ENCODE measurements at regions of chr6 and their contacts with region 1.

Region 1: DNA sequence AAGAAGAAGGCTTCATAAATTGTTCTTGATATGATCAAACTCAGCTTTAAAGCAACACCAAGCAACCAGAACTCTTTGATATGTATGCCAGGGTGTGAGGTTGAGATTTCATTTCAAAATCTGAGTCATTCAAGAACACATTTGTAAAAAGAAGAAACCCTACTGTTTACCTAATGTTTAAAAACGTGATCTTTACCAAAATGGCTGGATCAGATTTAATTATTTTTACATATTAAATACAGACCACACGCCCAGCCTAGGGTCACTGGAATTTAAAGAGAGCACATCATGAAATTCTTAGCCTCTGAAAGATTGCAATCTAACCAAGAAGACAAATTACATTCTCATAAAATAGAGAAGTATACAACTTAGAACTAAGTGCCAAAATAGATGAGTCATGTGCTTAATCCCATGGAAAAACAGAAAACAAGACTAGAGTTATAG is 206.8 kb upstream of the SMLR1 start:
- DNase-seq: no peak
- H3K4me3 Mint-ChIP-seq: no peak overlapping the region
- H3K27ac Mint-ChIP-seq: no peak overlapping the region
- H3K4me1 Mint-ChIP-seq: peaks cover 51% of the 10 kb centered on the region
- H3K27me3 Mint-ChIP-seq: no peaks in the 10 kb centered on the region

Region 2: GRCh38 chr6:130027948-130028347 is 592.4 kb before region 1 on chr6:
- intact Hi-C with region 1: loop called (anchors 5 kb)
- DNase-seq: no peak
- H3K4me3 Mint-ChIP-seq: no peak overlapping the region
- H3K27ac Mint-ChIP-seq: peak overlapping the region; percentile 67
- H3K4me1 Mint-ChIP-seq: peaks cover 36% of the 10 kb centered on the region
- H3K27me3 Mint-ChIP-seq: peaks cover 3% of the 10 kb centered on the region

Region 3: DNA sequence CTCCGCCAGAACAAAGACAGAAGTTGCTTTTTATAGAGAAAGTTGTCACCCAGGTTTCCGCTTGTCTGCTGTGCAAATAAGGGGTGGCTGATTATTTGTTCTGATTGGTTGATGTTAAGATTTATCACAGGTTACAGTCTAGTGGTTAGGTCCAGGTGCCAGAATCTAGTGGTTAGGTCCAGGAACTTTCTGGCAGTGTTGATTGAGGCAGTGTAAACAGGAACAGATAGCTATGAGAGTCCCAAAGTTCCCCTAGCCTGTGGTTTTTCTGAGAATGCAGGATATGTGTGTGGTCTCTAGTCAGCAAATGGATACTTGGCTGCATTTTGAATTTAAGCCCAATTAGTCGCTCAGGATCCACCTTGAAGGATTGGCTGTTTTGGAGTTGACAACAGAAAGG is 106.6 kb before region 1 on chr6:
- intact Hi-C with region 1: loop called (anchors 1 kb)
- DNase-seq: peak; percentile 76
- H3K4me3 Mint-ChIP-seq: no peak overlapping the region
- H3K27ac Mint-ChIP-seq: peak overlapping the region; percentile 88
- H3K4me1 Mint-ChIP-seq: peaks cover 57% of the 10 kb centered on the region
- H3K27me3 Mint-ChIP-seq: no peaks in the 10 kb centered on the region

Region 4: GRCh38 chr6:130575971-130576370 is 44.4 kb before region 1 on chr6:
- intact Hi-C with region 1: loop called (anchors 1 kb)
- DNase-seq: peak; percentile 73
- H3K4me3 Mint-ChIP-seq: peak overlapping the region; percentile 44
- H3K27ac Mint-ChIP-seq: peak overlapping the region; percentile 61
- H3K4me1 Mint-ChIP-seq: peaks cover 40% of the 10 kb centered on the region
- H3K27me3 Mint-ChIP-seq: no peaks in the 10 kb centered on the region

Region 5: DNA sequence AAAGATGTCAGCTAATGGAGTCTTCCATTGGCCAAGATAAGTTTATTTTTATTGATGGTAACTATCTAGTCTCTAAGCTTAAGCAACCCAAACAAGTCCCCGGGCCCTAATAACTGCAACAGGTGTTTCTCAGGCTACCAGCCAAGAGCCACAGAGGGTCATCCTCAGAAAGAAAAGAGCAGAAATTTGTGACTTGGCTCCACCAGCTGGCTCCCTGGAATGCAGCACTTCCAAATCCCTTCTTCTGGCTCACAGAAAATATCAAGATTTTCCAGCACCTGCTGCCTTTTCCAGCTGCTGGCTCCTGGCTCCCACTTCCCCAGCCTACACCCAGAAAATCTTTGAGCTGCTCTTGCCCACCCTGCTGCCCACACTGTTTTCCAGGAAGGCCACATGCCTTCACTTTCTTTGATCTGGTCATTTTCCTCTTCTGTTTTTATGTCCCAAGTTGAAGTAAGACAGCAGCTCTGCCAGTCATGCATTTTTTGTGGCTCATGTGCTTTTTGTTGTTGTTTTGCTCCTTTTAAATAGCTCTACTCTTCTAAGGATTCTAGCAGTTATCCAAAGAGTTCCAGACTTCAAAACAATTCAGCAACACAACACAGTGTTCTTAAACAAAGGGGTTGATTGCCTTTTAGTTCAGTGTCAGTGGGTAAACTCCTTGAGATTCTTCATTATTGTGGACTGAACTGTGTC is 55.9 kb after region 1 on chr6:
- intact Hi-C with region 1: loop called (anchors 5 kb)
- DNase-seq: no peak
- H3K4me3 Mint-ChIP-seq: no peak overlapping the region
- H3K27ac Mint-ChIP-seq: peak overlapping the region; percentile 1
- H3K4me1 Mint-ChIP-seq: peaks cover 20% of the 10 kb centered on the region
- H3K27me3 Mint-ChIP-seq: no peaks in the 10 kb centered on the region

Region 6: DNA sequence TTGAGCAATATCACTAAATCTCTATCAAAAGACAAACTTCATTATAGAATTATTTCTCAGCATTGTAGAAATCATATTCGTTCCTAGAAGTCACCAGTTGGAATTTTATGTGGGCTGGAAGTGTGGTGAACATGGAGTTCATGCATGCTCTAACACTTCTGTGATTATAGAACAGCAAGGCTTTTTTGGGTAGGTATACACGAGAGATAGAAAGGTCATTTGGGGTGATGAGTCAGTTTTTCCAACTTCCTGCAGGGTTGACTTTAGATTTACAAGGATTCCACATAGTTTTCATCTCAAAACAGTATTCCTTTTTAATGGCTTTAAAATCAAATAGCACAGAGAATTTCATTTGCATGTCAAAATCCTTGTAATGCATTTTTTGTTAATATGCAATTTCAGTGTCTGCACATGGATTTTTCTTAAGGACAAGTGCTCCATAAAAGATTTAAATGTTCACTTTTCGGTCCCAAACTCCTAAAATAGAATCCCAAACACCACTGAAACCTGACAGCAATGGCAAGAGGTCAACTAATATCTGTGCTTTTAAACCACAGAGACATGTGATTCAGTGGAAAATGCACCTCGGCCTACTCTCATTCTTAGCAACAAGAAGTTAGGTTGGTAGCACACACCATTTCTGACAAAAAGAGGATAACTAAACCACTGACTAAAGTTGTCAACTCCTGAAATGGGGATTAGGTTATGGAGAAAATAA is 1569.9 kb after region 1 on chr6:
- intact Hi-C with region 1: no loop called
- DNase-seq: no peak
- H3K4me3 Mint-ChIP-seq: no peak overlapping the region
- H3K27ac Mint-ChIP-seq: no peak overlapping the region
- H3K4me1 Mint-ChIP-seq: peaks cover 5% of the 10 kb centered on the region
- H3K27me3 Mint-ChIP-seq: no peaks in the 10 kb centered on the region

Measured in activated T-helper 2 cell treated with anti-CD3 and anti-CD28 coated beads, Interferon-gamma antibody, Interleukin-2, Interleukin-4, amounts not matched to agents 10 μg/mL and 5 μg/mL and 100 μg/mL, durations not matched to agents 14 hours and 24 hours and 36 hours (primary cell).